Activated T-helper 1 cell treated with anti-CD3 and anti-CD28 coated beads, Interleukin-12 subunit alpha, Interleukin-12 subunit beta, Interleukin-2, Interleukin-4 antibody, amounts not matched to agents 30 ng/mL and 10 ng/mL and 1 ng/mL, durations not matched to agents 14 hours and 24 hours and 36 hours (primary cell): ENCODE measurements at regions of chr16 and their contacts with region 1.

Region 1: DNA sequence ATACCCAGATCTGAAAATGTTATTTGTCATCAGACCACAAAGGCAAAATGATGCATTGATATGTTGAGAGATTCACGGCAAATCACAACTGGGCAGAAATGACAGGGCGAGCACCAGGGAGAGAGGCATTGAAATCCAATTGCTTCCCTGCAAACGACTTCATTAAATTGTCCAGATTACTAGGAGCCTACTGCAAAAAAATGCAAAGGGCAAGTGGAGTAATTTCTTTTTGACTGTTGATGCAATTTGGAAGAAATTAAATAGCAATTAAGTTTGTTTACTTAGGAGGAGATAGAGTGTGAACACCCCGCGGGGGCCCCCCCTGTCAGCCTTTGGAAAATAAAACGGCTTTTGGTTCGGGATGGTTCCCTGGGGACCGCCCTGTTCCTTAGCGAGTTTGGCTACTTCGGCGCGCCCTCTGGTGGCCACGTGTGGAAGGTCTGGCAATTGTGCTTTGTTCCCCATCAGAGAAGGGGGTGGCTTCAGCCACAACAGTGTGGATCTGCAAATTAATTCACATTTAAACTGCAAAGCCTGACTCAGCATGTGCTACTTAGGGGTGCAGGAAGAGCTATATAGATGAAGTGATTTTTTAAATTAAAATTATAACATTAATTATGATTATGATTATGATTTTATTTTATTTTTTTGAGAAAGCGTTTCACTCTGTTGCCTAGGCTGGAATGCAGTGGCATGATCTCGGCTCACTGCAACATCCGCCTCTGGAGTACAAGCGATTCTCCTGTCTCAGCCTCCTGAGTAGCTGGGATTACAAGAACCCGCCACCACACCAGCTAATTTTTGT is 14.5 kb upstream of the TMC7 start:
- DNase-seq: peak; percentile 73
- H3K4me3 Mint-ChIP-seq: peak overlapping the region; percentile 59
- H3K27ac Mint-ChIP-seq: no peak overlapping the region
- H3K4me1 Mint-ChIP-seq: peaks cover 12% of the 10 kb centered on the region
- H3K27me3 Mint-ChIP-seq: peaks cover 5% of the 10 kb centered on the region

Region 2: GRCh38 chr16:18950469-18951185 is 18.6 kb before region 1 on chr16:
- intact Hi-C with region 1: loop called (anchors 1 kb)
- DNase-seq: no peak
- H3K4me3 Mint-ChIP-seq: no peak overlapping the region
- H3K27ac Mint-ChIP-seq: no peak overlapping the region
- H3K4me1 Mint-ChIP-seq: peaks cover 34% of the 10 kb centered on the region
- H3K27me3 Mint-ChIP-seq: peaks cover 6% of the 10 kb centered on the region

Region 3: DNA sequence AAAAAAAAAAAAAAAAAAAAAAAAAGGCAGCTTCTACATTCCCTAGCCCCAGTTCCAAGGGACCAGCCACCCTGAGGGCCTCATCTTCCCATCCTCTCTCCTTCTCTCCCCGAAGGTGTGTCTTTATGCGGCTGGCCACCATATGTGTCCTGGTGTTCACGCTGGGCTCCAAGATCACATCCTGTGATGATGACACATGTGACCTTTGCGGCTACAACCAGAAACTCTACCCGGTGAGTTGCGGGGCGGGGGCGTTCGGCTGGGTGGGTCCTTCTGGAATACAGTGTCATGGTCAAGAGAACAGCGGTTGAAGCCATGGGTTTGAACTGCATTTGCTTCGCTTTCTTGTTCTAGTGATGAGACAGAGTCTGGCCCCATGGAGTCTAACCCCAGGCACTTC is 75.5 kb after region 1 on chr16:
- intact Hi-C with region 1: no loop called
- DNase-seq: no peak
- H3K4me3 Mint-ChIP-seq: no peak overlapping the region
- H3K27ac Mint-ChIP-seq: no peak overlapping the region
- H3K4me1 Mint-ChIP-seq: no peaks in the 10 kb centered on the region
- H3K27me3 Mint-ChIP-seq: no peaks in the 10 kb centered on the region